Panc1 (cell line): ENCODE measurements at regions of chr17 and their contacts with region 1.

Region 1: GRCh38 chr17:7261172-7261927 is 928 bp downstream of the CLDN7 start:
- DNase-seq: no peak
- ATAC-seq: peak; percentile 70
- H3K4me3 ChIP-seq: peak overlapping the region; percentile 50 to 65
- H3K27ac ChIP-seq: peak overlapping the region; percentile 81
- H3K4me1 ChIP-seq: peaks cover 22% of the 10 kb centered on the region
- H3K27me3 ChIP-seq: no peaks in the 10 kb centered on the region
- CTCF ChIP-seq: no peak

Region 2: GRCh38 chr17:7114875-7115614 is 146.3 kb before region 1 on chr17:
- CTCF ChIA-PET with region 1: no interaction called
- POLR2A ChIA-PET with region 1: no interaction called
- in situ Hi-C with region 1: no loop called
- intact Hi-C with region 1: no loop called
- DNase-seq: no peak
- ATAC-seq: no peak
- H3K4me3 ChIP-seq: no peak overlapping the region
- H3K27ac ChIP-seq: no peak overlapping the region
- H3K4me1 ChIP-seq: no peaks in the 10 kb centered on the region
- H3K27me3 ChIP-seq: no peaks in the 10 kb centered on the region
- CTCF ChIP-seq: no peak

Region 3: GRCh38 chr17:7191571-7192270 is 69.6 kb before region 1 on chr17:
- CTCF ChIA-PET with region 1: no interaction called
- POLR2A ChIA-PET with region 1: no interaction called
- in situ Hi-C with region 1: no loop called
- intact Hi-C with region 1: no loop called
- DNase-seq: no peak
- ATAC-seq: peak; percentile 86
- H3K4me3 ChIP-seq: no peak overlapping the region
- H3K27ac ChIP-seq: no peak overlapping the region
- H3K4me1 ChIP-seq: no peaks in the 10 kb centered on the region
- H3K27me3 ChIP-seq: no peaks in the 10 kb centered on the region
- CTCF ChIP-seq: no peak

Region 4: DNA sequence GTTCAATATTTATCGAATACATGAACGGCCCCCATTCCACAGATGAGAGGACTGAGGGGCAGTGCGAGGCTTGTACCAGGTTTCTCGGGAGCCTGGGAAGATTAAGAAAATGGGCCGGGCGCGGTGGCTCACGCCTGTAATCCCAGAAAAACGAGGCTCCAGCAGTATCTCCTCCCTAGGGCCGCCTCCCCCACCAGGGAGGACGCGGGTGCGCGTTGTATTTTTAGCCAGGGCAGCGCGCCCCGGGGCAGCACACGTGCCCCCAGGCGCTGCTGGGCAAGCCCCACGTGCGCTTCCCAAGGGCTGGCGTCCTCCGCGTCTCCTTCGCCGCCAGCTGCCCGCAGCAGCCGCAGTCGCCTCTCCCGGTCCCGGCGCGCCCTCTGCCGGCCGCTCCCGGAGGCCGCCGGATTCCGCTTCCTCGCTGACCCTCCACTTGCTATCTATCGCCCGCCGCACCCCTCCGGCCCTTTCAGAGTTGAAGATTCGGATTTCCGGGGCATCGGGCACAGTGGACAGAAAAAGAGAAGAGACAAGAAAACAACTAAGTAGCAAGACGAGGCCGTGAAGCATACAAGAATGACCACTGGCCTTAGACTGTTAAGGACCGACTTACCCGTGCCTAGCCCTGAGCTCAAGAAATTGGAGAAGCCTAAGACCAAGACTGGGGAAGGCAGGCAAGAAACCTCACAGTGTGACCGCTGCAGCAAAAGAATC is 35.0 kb after region 1 on chr17:
- CTCF ChIA-PET with region 1: no interaction called
- POLR2A ChIA-PET with region 1: interaction called, 11 read pairs
- in situ Hi-C with region 1: no loop called
- intact Hi-C with region 1: no loop called
- DNase-seq: no peak
- ATAC-seq: peak; percentile 79
- H3K4me3 ChIP-seq: peak overlapping the region; percentile 3 to 31; a peak in 2 of 4 replicates
- H3K27ac ChIP-seq: peak overlapping the region; percentile 57; the same call in 1 of the 2 replicates
- H3K4me1 ChIP-seq: peaks cover 17% of the 10 kb centered on the region
- H3K27me3 ChIP-seq: no peaks in the 10 kb centered on the region
- CTCF ChIP-seq: peak; percentile 96

Region 5: DNA sequence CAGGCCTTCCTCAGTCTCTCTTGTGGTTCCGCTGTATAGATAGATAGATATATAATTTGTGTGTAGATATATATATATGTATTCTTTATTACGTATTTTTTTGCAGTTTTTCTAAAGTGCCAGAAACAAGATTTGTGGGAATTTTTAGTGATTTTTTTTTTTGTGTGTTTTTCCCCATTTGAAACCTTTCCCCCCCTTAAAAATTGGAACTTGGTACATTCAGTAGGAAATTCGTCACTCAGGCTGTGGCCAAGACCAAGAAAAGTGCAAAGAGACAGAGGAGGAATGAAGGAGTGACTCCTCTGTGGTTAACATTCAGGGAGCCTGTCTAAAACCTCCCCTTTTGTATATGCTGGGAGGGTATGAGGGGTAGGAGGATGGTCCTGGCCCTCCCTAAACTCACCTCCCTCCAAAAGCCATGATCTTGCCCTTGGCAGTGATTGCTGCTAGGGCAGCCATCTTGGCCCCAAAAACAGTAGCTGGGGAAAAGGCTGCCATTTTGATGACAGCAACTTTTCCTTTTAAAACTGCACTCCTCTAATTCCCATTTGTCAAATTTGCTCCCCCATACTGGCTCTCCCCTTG is 198.7 kb after region 1 on chr17:
- CTCF ChIA-PET with region 1: interaction called, 10 read pairs
- POLR2A ChIA-PET with region 1: no interaction called
- in situ Hi-C with region 1: no loop called
- intact Hi-C with region 1: no loop called
- DNase-seq: no peak
- ATAC-seq: no peak
- H3K4me3 ChIP-seq: no peak overlapping the region
- H3K27ac ChIP-seq: no peak overlapping the region
- H3K4me1 ChIP-seq: no peaks in the 10 kb centered on the region
- H3K27me3 ChIP-seq: no peaks in the 10 kb centered on the region
- CTCF ChIP-seq: no peak